AG04449 (cell line): ENCODE measurements at regions of chr9 and their contacts with region 1.

Region 1: GRCh38 chr9:34701769-34702736 is 7.9 kb downstream of the CCL21 start:
- DNase-seq: peak; percentile 16
- H3K4me3 ChIP-seq: peak overlapping the region; percentile 62
- CTCF ChIP-seq: peak; percentile 99

Region 2: DNA sequence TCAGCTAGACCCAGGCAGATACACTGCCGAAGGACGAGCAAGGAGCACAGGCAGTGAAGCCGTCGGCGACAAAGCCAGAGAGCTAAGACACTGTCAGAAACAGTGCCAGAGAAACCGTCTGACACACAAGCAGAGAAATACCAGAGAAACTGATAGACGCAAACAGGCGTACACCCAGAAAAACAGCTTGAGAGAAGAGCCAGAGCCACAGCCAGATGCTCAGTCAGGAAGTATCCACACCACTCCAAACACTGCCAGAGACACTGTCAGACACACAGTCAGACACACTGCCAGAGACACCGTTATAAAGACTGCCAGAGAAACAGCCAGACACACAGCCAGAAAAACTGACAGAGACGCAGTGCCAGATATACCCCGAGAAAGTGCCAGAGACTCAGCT is 131.7 kb before region 1 on chr9:
- CTCF ChIA-PET with region 1: no interaction called
- POLR2A ChIA-PET with region 1: no interaction called
- DNase-seq: no peak
- H3K4me3 ChIP-seq: no peak overlapping the region
- CTCF ChIP-seq: no peak

Region 3: GRCh38 chr9:34611829-34612630 is 90.0 kb before region 1 on chr9 and contains the start of gene RPP25L:
- CTCF ChIA-PET with region 1: interaction called, 47 read pairs
- POLR2A ChIA-PET with region 1: no interaction called
- DNase-seq: no peak
- H3K4me3 ChIP-seq: peak within 1 kb of the TSS; percentile 86
- CTCF ChIP-seq: no peak

Region 4: GRCh38 chr9:34646211-34647083 is 55.6 kb before region 1 on chr9 and contains the start of gene GALT:
- CTCF ChIA-PET with region 1: interaction called, 19 read pairs
- POLR2A ChIA-PET with region 1: no interaction called
- DNase-seq: peak; percentile 42
- H3K4me3 ChIP-seq: peak within 1 kb of the TSS; percentile 89
- CTCF ChIP-seq: peak; percentile 89

Region 5: GRCh38 chr9:34665381-34666250 is 36.4 kb before region 1 on chr9:
- CTCF ChIA-PET with region 1: interaction called, 14 read pairs
- POLR2A ChIA-PET with region 1: no interaction called
- DNase-seq: peak; percentile 65
- H3K4me3 ChIP-seq: peak overlapping the region; percentile 92
- CTCF ChIP-seq: no peak

Region 6: DNA sequence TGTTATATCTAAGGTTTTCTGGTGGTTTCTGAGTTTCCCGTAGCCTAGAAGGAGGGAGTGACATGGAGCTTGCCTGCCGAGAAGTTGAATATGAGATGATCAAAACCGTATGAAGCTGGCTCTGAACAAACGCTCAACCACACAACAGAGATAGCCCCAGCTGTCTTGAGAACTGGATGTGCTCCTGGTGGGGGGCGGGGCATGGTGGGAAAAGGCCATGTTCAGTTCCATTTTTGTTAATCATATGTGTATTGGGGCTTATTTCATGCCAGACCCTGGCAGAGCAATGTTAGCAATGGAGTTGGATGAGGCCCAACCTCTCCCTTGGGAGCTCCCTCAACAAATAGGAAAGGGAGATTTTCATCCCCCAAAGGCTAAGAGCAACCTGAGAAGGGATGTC is 15.8 kb before region 1 on chr9:
- CTCF ChIA-PET with region 1: interaction called, 163 read pairs
- POLR2A ChIA-PET with region 1: interaction called, 3 read pairs
- DNase-seq: no peak
- H3K4me3 ChIP-seq: no peak overlapping the region
- CTCF ChIP-seq: no peak